ENCODE measurements at regions of chr15 and their contacts with region 1.

Region 1: GRCh38 chr15:89429023-89429422 is 67.4 kb downstream of the RHCG start:
- DNase-seq: peak in 1 of 4 donors; percentile 56
- ATAC-seq: no peak
- H3K4me3 ChIP-seq: no peak overlapping the region
- H3K27ac ChIP-seq: no peak overlapping the region
- H3K4me1 ChIP-seq: peaks cover 3 to 14% of the 10 kb centered on the region in 2 donors
- H3K27me3 ChIP-seq: peaks cover 0 to 77% of the 10 kb centered on the region in 2 donors
- CTCF ChIP-seq: no peak

Region 2: DNA sequence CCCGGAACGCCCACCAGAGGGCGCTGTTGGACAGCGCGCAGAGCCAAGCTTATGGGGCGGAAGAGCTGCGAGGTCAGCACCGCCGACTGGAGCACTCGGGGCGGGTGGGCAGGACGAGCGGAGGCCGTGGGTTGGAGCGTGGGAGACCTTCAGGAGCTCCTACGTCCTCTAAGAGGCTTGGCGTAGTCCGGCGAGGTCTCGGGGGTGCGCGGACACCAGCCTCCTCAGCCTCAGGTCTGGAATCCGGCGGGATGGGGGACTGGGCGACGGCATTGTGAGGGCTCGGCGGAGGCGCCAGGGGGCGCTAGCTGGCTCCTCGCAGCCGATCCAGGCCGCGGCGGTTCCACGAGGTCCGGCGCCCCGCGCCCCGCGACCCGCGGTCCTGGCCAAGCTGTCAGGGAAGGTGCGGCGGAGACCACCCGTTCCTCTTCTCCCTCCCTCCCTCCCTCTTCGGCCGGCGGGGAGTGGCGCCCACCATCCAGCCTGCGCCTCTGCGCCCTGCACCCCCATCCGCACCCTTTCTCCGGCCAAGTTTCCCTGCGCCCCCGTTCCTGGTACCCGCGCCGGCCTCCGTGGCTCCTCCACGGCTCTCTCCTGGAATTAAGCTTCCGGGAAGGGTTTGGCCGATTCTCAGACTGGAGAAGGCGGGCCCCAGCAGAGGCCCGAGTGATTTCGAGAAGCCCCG is 70.1 kb before region 1 on chr15:
- intact Hi-C with region 1: loop called in 1 of 2 experiments (anchors 5 kb)
- DNase-seq: peak; percentile 80 to 97 (median 85)
- ATAC-seq: peak; percentile 97
- H3K4me3 ChIP-seq: peak overlapping the region; percentile 27 to 41
- H3K27ac ChIP-seq: no peak overlapping the region
- H3K4me1 ChIP-seq: peaks cover 6 to 34% of the 10 kb centered on the region in 2 donors
- H3K27me3 ChIP-seq: peaks cover 75 to 100% of the 10 kb centered on the region in 2 donors
- CTCF ChIP-seq: peak; percentile 99 to 100

Measured in left lung (tissue), 14 donors.